PC-9 (cell line): ENCODE measurements at regions of chr2 and their contacts with region 1.

Region 1: GRCh38 chr2:80429251-80429650 is 124.7 kb upstream of the LRRTM1 start:
- DNase-seq: no peak
- H3K4me3 ChIP-seq: no peak overlapping the region
- H3K27ac ChIP-seq: no peak overlapping the region
- H3K4me1 ChIP-seq: no peaks in the 10 kb centered on the region
- H3K27me3 ChIP-seq: peaks cover 12% of the 10 kb centered on the region
- CTCF ChIP-seq: no peak

Region 2: GRCh38 chr2:79771493-79771892 is 657.8 kb before region 1 on chr2:
- CTCF ChIA-PET with region 1: no interaction called
- POLR2A ChIA-PET with region 1: no interaction called
- intact Hi-C with region 1: no loop called
- DNase-seq: no peak
- H3K4me3 ChIP-seq: no peak overlapping the region
- H3K27ac ChIP-seq: no peak overlapping the region
- H3K4me1 ChIP-seq: no peaks in the 10 kb centered on the region
- H3K27me3 ChIP-seq: no peaks in the 10 kb centered on the region; the same call in none of the 2 replicates
- CTCF ChIP-seq: no peak

Region 3: GRCh38 chr2:81007104-81007503 is 577.9 kb after region 1 on chr2:
- CTCF ChIA-PET with region 1: no interaction called
- POLR2A ChIA-PET with region 1: no interaction called
- intact Hi-C with region 1: no loop called
- DNase-seq: no peak
- H3K4me3 ChIP-seq: no peak overlapping the region
- H3K27ac ChIP-seq: no peak overlapping the region
- H3K4me1 ChIP-seq: no peaks in the 10 kb centered on the region
- H3K27me3 ChIP-seq: no peaks in the 10 kb centered on the region
- CTCF ChIP-seq: no peak; the same call in 1 of the 2 replicates

Region 4: GRCh38 chr2:81171447-81171846 is 742.2 kb after region 1 on chr2:
- CTCF ChIA-PET with region 1: interaction called, 11 read pairs
- POLR2A ChIA-PET with region 1: no interaction called
- intact Hi-C with region 1: no loop called
- DNase-seq: no peak
- H3K4me3 ChIP-seq: no peak overlapping the region
- H3K27ac ChIP-seq: no peak overlapping the region
- H3K4me1 ChIP-seq: no peaks in the 10 kb centered on the region
- H3K27me3 ChIP-seq: no peaks in the 10 kb centered on the region
- CTCF ChIP-seq: no peak